Esophagus muscularis mucosa (tissue), 4 donors: ENCODE measurements at regions of chr2 and their contacts with region 1.

Region 1: GRCh38 chr2:168635065-168635577 is 167.3 kb upstream of the NOSTRIN start:
- DNase-seq: no peak
- H3K4me3 ChIP-seq: peak overlapping the region in 1 of 4 donors; percentile 5
- H3K27ac ChIP-seq: peak overlapping the region; percentile 78 to 86 (median 82)
- H3K4me1 ChIP-seq: peaks cover 46 to 83% (median 67%) of the 10 kb centered on the region in 4 donors
- H3K27me3 ChIP-seq: no peaks in the 10 kb centered on the region
- CTCF ChIP-seq: no peak
- EP300 ChIP-seq: no peak
- POLR2A ChIP-seq: no peak

Region 2: DNA sequence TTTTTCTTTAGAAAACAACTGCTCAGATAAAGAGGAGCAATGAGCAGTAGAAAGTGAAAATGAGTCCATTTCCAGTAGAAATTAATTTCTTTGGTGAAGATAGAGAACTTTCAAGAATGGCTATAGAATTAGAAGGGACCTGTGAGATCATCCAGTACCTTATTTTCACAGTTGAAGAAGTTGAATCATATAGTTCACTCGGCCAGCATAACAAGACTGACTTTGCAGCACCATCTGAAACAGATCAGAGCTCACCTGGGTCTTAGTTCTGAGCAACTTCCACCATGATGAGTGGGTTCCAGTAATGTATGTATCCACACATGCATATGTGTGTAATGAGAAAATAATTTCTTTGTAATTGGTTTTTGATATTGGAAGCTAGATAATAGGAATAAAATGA is 120.4 kb before region 1 on chr2:
- intact Hi-C with region 1: loop called (anchors 5 kb)
- DNase-seq: no peak
- H3K4me3 ChIP-seq: no peak overlapping the region
- H3K27ac ChIP-seq: peak overlapping the region in 3 of 4 donors; percentile 70
- H3K4me1 ChIP-seq: peaks cover 43 to 64% (median 53%) of the 10 kb centered on the region in 4 donors
- H3K27me3 ChIP-seq: no peaks in the 10 kb centered on the region
- CTCF ChIP-seq: no peak
- EP300 ChIP-seq: no peak
- POLR2A ChIP-seq: no peak

Region 3: DNA sequence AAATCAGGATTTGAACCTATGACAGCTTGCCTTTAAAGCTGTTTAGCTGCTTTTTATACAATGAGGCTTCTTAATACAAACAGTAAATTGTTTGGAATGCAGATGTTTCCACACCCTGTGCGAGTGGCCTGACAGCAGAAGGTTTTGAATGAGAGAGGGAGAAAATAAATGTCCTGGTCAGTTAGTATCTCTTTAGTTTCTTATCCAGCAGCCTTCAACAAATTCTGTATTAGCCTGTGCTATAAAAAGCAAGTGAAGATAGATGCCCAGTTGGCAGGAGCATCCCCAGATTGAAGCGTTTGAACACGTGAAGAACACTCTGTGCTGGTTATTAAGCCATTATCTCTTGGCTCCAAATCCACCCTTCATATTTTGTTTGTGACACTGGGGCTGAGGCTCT is 108.5 kb before region 1 on chr2:
- intact Hi-C with region 1: loop called (anchors 5 kb)
- DNase-seq: no peak
- H3K4me3 ChIP-seq: no peak overlapping the region
- H3K27ac ChIP-seq: peak overlapping the region; percentile 72 to 81 (median 75)
- H3K4me1 ChIP-seq: peaks cover 87 to 98% (median 97%) of the 10 kb centered on the region in 4 donors
- H3K27me3 ChIP-seq: no peaks in the 10 kb centered on the region
- CTCF ChIP-seq: no peak
- EP300 ChIP-seq: peak; percentile 76
- POLR2A ChIP-seq: no peak

Region 4: DNA sequence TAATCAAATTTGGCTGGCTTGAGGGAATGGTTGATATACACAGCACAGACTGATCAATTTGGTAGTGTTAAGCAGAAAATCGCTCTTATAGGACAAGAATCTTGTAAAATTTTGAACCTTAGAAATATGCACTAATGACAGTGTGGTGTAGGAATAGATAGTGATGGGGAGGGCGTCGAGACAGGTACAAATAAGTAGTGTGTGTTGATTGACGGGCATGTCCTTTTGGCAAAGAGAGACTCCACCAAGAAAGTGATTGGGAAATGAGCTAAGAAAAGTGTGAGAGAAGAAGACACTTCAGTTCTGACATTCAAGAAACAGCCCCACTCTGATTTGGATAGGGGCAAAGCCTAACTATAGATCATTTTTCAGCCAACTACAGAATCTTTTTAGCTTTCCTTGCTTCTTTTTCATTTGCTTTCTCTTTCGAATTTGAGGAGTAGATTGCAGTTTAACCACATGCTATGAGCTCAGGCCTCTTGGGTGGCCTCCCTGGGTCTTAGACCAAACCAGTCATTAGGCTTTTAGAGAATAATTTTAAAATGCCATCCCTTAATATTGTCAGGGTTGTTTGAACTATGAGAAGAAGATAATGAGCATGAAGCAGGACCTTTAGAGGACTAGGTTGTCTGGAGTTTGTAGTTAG is 51.9 kb before region 1 on chr2:
- intact Hi-C with region 1: loop called (anchors 10 kb)
- DNase-seq: no peak
- H3K4me3 ChIP-seq: no peak overlapping the region
- H3K27ac ChIP-seq: peak overlapping the region; percentile 15 to 42 (median 25)
- H3K4me1 ChIP-seq: peaks cover 23 to 46% (median 44%) of the 10 kb centered on the region in 4 donors
- H3K27me3 ChIP-seq: no peaks in the 10 kb centered on the region
- CTCF ChIP-seq: no peak
- EP300 ChIP-seq: no peak
- POLR2A ChIP-seq: no peak